ENCODE measurements at regions of chr6 and their contacts with region 1.

Region 1: DNA sequence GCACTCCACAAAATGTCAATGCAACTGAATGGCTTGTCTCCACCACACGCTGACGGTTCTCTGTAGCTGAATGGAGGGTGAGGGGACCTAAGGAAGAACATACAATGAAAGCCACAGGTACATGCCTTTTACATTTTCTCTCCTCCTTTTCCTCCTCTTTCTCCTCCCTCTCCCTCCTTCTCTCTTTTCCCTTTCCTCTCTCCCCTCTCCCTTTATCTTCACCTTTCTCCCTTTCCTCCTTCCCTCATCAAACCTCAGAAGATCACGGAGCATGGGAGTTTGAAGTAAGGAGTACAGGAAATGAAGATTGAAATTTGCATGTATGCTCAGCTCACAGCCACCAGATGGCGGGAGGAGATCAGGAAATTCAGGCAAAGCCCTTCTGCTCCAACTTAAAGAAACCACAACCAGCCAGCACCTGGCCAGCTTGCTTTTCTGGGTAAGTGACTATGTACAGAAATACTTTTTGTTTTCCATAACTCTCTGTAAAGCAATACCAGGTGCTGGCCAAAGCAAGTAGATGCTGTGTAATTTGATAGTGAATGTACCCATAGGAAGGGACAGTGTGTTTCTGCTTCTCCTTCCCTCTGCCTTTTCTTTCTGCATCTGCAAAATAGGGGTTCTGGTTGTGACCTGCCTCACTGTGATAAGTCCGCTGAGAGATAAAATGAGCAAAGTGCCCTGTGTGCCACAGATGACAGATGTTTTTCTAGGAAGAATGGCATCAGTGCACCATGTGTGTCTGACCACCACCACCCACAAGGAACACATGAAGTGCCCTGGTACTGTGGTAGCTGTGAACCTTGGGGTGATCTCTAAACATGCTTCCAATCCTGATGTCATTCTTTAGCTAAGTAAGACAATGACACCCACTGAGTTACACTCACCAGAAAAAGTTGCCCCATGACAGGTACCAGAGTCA is 18.6 kb upstream of the FOXO3 start:
- DNase-seq: peak; percentile 83
- H3K4me3 Mint-ChIP-seq: peak overlapping the region; percentile 34
- H3K27ac Mint-ChIP-seq: no peak overlapping the region
- H3K4me1 Mint-ChIP-seq: peaks cover 7% of the 10 kb centered on the region
- H3K27me3 Mint-ChIP-seq: peaks cover 8% of the 10 kb centered on the region

Region 2: GRCh38 chr6:107877968-107878367 is 664.1 kb before region 1 on chr6:
- CTCF ChIA-PET with region 1: no interaction called
- intact Hi-C with region 1: no loop called
- DNase-seq: no peak
- H3K4me3 Mint-ChIP-seq: no peak overlapping the region
- H3K27ac Mint-ChIP-seq: no peak overlapping the region
- H3K4me1 Mint-ChIP-seq: peaks cover 2% of the 10 kb centered on the region
- H3K27me3 Mint-ChIP-seq: no peaks in the 10 kb centered on the region

Region 3: DNA sequence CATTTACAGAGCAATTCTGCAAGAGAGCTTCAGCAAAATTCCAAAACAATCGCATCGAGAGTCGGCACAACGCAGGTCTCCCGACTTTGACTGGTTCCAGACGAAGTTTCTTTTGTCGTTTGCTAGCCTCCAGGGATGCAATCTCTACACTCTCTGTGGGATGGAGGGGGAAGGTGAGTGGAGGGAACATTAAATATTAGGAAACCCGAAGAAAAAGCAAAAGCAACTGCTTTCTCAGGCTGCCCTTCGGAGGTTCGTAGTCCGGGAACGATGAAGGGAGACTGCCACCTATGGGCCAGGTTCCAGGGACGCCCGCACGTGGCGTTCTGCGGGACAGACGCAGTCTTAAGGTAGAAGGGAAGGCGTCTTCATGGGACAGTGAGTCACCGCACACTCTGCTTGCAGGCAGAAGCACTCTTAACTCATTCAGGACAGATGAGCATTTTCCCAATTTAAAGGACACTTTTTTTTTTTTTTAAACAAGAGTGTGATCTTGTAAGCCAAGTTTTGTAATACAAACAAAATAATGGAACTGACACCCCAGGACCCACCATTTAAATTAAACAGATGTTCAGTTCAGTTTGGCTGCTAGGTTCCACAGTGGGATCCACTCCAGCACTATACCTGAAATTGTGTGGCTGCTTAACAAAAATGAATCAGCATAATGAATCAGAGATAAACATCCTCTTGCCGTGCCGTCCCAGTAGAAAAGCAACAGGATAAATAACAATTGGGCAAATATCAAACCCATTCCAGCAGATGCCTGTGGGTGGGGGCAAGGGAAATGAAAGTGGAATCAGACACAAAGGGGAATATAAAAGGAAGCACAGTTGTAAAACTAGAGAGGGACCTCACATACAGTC is 240.3 kb after region 1 on chr6:
- CTCF ChIA-PET with region 1: interaction called, 17 read pairs
- intact Hi-C with region 1: loop called (anchors 1 kb)
- DNase-seq: peak; percentile 92
- H3K4me3 Mint-ChIP-seq: peak overlapping the region; percentile 68
- H3K27ac Mint-ChIP-seq: no peak overlapping the region
- H3K4me1 Mint-ChIP-seq: peaks cover 10% of the 10 kb centered on the region
- H3K27me3 Mint-ChIP-seq: peaks cover 3% of the 10 kb centered on the region

Measured in activated naive CD4-positive, alpha-beta T cell treated with anti-CD3 and anti-CD28 coated beads for 36 hours (primary cell).